Colonic mucosa (tissue), 4 donors: ENCODE measurements at regions of chr14 and their contacts with region 1.

Region 1: DNA sequence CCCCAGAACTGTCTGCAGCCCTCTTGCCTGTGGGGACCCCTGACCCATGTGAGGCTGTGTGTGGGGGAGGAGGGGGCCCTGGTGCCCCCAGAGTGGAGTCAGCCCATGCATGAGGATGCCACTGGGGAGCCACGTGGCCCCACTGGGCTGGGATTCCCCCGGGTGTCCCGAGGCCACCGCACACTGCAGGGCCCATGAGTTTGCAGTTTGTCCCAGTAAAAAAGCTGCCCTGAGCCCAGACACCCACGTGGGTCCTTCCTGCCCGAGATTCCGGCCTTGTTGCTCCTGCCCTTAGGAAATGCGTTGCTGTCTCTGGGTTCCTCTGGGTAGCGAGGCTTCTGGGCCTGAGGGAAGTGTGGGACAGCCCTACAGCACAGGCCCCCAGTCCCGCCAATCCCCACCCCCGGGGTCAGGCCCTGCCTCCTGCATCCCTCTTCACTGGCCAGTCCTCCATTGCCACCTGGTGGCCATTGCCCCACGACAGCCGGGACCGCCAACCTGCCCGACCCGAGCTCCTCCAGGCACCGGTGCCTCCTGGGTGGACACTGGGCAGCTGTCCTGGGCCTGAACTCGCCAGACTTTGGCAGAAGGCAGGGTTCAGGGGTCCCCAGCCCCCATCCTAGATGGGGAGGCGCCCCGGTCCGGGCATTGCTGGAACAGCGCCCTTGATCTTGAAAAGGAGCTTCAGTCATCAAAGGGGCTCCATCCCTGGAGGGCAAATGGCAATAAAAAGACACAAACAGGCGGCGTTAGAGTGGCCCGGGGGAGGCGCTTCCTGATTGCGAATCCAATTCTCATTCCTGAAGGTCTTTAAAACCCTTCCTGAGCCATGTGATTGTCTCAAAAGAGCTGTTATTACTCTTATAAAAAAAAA is 15.6 kb upstream of the C14orf180 start:
- DNase-seq: peak; percentile 70
- H3K4me3 ChIP-seq: no peak overlapping the region
- H3K27ac ChIP-seq: no peak overlapping the region
- H3K4me1 ChIP-seq: no peaks in the 10 kb centered on the region
- H3K27me3 ChIP-seq: no peaks in the 10 kb centered on the region
- CTCF ChIP-seq: peak; percentile 59

Region 2: GRCh38 chr14:104094709-104095438 is 469.1 kb before region 1 on chr14:
- intact Hi-C with region 1: loop called (anchors 10 kb)
- DNase-seq: peak; percentile 82
- H3K4me3 ChIP-seq: no peak overlapping the region
- H3K27ac ChIP-seq: no peak overlapping the region
- H3K4me1 ChIP-seq: peaks cover 2% of the 10 kb centered on the region
- H3K27me3 ChIP-seq: no peaks in the 10 kb centered on the region
- CTCF ChIP-seq: peak; percentile 97